ENCODE measurements at regions of chr16 and their contacts with region 1.

Region 1: DNA sequence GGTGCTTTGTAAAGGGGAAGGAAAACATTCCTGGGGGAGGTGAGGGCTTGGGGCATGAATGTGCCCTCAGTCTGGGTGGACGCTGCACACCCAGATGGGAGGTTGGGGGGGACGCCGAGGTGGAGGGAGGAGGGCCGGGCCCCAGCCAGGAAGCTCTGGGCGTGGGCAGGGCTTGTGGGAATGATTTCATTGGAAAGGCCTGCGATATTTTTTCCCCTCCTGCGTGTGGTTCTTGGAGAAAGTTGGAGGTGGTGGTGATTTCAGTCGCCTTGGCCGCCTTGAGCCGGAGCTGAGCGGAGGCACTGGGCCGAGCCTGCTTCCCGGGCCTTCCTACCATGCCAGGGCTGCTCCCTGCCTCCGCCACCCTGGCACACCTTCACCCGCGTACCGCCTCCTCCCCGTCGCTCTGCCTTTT is 26.4 kb upstream of the CLEC18A start:
- DNase-seq: peak; percentile 46 to 93
- H3K4me3 ChIP-seq: peak overlapping the region; percentile 53 to 72
- H3K27ac ChIP-seq: peak overlapping the region; percentile 96 to 97
- H3K4me1 ChIP-seq: peaks cover 18 to 57% of the 10 kb centered on the region in 2 donors
- H3K27me3 ChIP-seq: no peaks in the 10 kb centered on the region
- CTCF ChIP-seq: no peak

Region 2: DNA sequence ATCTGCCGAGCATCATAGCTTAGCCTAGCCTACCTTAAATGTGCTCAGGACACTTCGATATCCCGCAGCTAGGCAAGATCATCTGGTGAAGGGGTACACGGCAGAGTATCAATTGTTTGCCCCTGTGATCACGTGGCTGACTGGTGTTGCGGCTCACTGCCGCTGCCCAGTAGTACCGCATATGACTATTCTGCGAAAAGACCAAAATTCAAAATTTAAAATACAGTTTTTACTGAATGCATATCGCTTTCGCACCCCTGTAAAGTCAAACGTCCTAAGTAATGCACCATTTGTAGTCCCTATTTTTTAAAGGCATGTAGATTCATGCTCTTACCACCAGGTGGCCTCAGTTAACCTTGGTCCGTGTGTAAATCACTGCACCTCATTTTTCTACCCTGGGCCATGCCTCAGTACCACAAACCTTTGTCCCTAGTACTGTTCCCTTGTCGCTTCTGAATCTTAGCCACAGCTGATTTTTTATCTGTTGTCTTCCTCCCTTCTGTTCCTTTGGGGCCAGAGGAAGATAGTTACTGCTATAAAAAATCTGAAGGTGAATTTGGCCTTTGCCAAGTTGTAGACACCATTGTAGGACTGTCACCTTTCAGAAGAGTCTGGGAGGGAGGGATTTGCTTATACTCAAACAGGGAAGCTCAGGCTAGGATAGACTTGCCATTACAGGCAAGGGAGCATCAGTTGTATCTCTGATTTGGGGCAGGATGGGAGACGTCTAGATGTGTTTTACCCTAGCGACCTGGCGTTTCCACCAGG is 128.2 kb before region 1 on chr16:
- intact Hi-C with region 1: loop called (anchors 1 kb)
- DNase-seq: no peak
- H3K4me3 ChIP-seq: peak overlapping the region in 1 of 2 donors; percentile 46
- H3K27ac ChIP-seq: peak overlapping the region in 1 of 2 donors; percentile 17
- H3K4me1 ChIP-seq: peaks cover 0 to 5% of the 10 kb centered on the region in 2 donors
- H3K27me3 ChIP-seq: no peaks in the 10 kb centered on the region
- CTCF ChIP-seq: peak; percentile 82 to 89 (median 89)

Region 3: GRCh38 chr16:69848637-69849545 is 75.9 kb before region 1 on chr16:
- intact Hi-C with region 1: loop called (anchors 2 kb)
- DNase-seq: peak; percentile 82 to 97
- H3K4me3 ChIP-seq: peak overlapping the region; percentile 20 to 29
- H3K27ac ChIP-seq: peak overlapping the region; percentile 78 to 82
- H3K4me1 ChIP-seq: peaks cover 6 to 20% of the 10 kb centered on the region in 2 donors
- H3K27me3 ChIP-seq: no peaks in the 10 kb centered on the region
- CTCF ChIP-seq: peak in 1 of 3 experiments; percentile 26

Region 4: DNA sequence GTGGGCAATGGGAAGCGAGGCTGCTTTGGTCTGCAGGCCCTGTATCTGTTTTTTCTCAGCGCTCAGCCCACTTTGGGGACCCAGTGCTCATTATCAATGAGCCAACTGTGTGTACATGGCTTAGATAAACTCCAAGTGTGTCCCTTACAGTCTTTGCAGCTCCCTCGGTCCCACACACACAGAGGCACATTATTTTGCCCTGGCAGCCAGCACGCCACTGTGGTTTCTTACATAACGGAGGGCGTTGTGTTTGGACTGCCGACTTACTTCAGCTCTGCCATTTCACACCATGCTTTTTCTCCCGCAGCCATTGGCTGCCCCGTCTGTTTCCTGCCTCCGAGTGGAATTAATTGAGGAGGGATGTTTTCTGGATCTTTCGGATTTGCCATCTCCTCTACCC is 30.1 kb before region 1 on chr16:
- intact Hi-C with region 1: no loop called
- DNase-seq: no peak
- H3K4me3 ChIP-seq: no peak overlapping the region
- H3K27ac ChIP-seq: peak overlapping the region in 1 of 2 donors; percentile 27
- H3K4me1 ChIP-seq: peaks cover 0 to 15% of the 10 kb centered on the region in 2 donors
- H3K27me3 ChIP-seq: no peaks in the 10 kb centered on the region
- CTCF ChIP-seq: no peak

Region 5: DNA sequence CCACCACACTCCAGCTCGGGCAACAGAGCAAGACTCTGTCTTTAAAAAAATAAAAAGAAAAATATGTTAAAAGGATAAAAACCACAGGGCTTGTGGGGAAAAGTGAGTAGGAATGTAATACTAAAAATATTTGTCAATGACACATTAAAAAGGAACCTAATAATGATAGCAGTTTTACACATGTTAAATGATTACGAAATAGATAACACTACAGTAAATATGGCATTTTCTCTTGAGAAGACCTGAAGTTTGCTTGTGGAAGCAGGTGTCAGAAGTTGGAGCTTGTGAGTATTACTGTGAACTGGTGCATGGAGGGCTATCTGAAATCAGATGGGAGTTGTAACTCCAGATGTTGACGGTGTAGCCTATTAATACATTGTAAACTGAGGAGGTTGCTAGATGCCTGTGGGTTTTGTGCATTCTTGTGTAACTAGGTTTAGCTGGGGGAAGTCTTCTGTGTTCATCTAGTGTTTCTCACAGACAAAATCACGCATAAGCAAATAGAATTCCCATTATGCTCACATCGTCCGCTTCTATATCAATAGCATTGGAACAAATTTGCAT is 17.9 kb before region 1 on chr16:
- intact Hi-C with region 1: no loop called
- DNase-seq: no peak
- H3K4me3 ChIP-seq: no peak overlapping the region
- H3K27ac ChIP-seq: no peak overlapping the region
- H3K4me1 ChIP-seq: peaks cover 0 to 2% of the 10 kb centered on the region in 2 donors
- H3K27me3 ChIP-seq: no peaks in the 10 kb centered on the region
- CTCF ChIP-seq: no peak

Region 6: DNA sequence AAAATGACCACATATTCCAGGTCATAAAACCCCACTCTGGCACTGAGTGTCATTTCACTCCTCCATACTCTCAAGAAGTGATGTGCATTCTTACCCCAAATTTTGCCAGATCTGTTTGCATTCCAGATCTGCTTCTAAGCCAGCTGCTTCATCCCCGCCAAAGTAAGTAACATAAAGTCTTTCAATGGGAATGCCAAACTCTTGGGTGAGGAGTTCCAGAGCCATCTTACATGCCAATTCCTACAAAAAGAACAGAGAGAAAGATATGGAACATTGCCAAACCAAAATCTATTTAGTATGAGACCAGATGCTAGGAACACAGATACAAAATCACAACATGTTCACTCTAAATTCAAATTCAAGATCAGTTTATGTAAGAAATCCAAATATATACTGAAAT is 351.6 kb after region 1 on chr16:
- intact Hi-C with region 1: no loop called
- DNase-seq: no peak
- H3K4me3 ChIP-seq: no peak overlapping the region
- H3K27ac ChIP-seq: no peak overlapping the region
- H3K4me1 ChIP-seq: no peaks in the 10 kb centered on the region
- H3K27me3 ChIP-seq: no peaks in the 10 kb centered on the region
- CTCF ChIP-seq: no peak

Measured in ascending aorta (tissue), 2 donors.